ENCODE measurements at regions of chr6 and their contacts with region 1.

Region 1: GRCh38 chr6:33425668-33426577 is 6.1 kb downstream of the SYNGAP1 start:
- DNase-seq: peak; percentile 94 to 98 (median 96)
- ATAC-seq: peak; percentile 87
- H3K4me3 ChIP-seq: peak overlapping the region; percentile 57
- H3K27ac ChIP-seq: peak overlapping the region; percentile 95
- H3K4me1 ChIP-seq: peaks cover 43 to 53% of the 10 kb centered on the region in 2 experiments
- H3K27me3 ChIP-seq: no peaks in the 10 kb centered on the region
- CTCF ChIP-seq: peak; percentile 72 to 95 (median 90)
- EP300 ChIP-seq: no peak; the same call in 1 of the 2 replicates
- POLR2A ChIP-seq: peak; percentile 6; the same call in 1 of the 2 replicates
- RAD21 ChIP-seq: peak; percentile 74 to 79

Region 2: GRCh38 chr6:33271458-33272274 is 154.3 kb before region 1 on chr6 and contains the starts of genes RPS18 and VPS52:
- CTCF ChIA-PET with region 1: interaction called, 4 read pairs
- POLR2A ChIA-PET with region 1: interaction called, 14 read pairs
- in situ Hi-C with region 1: no loop called
- intact Hi-C with region 1: no loop called
- DNase-seq: peak; percentile 89 to 100 (median 92)
- ATAC-seq: peak; percentile 85
- H3K4me3 ChIP-seq: peak within 1 kb of the TSS; percentile 93
- H3K27ac ChIP-seq: peak within 1 kb of the TSS; percentile 98
- H3K4me1 ChIP-seq: peaks cover 11 to 38% of the 10 kb centered on the region in 2 experiments
- H3K27me3 ChIP-seq: no peaks in the 10 kb centered on the region; a peak in 1 of 5 replicates
- CTCF ChIP-seq: 0 out of 6 replicates have a peak, but pooled peaks of 1 of the 3 experiments have one; percentile 4
- EP300 ChIP-seq: peak; percentile 68; the same call in 1 of the 2 replicates
- POLR2A ChIP-seq: peak; percentile 100
- RAD21 ChIP-seq: peak in 1 of 2 experiments; percentile 16; a peak in 1 of 4 replicates
- polyA plus RNA-seq, gene RPS18: 14,899 to 17,516 TPM
- polyA plus RNA-seq, gene VPS52: 24.4 to 37.6 TPM

Region 3: GRCh38 chr6:33299237-33299944 is 126.5 kb before region 1 on chr6:
- CTCF ChIA-PET with region 1: interaction called, 4 read pairs
- POLR2A ChIA-PET with region 1: interaction called, 20 read pairs
- in situ Hi-C with region 1: no loop called
- intact Hi-C with region 1: loop called (anchors 5 kb)
- DNase-seq: peak; percentile 90 to 98 (median 92)
- ATAC-seq: peak; percentile 84
- H3K4me3 ChIP-seq: peak overlapping the region; percentile 64
- H3K27ac ChIP-seq: peak overlapping the region; percentile 94
- H3K4me1 ChIP-seq: peaks cover 11 to 44% of the 10 kb centered on the region in 2 experiments
- H3K27me3 ChIP-seq: no peaks in the 10 kb centered on the region
- CTCF ChIP-seq: peak; percentile 89 to 97 (median 97)
- EP300 ChIP-seq: peak; percentile 46
- POLR2A ChIP-seq: peak; percentile 99
- RAD21 ChIP-seq: peak; percentile 68 to 69

Region 4: GRCh38 chr6:33391278-33391921 is 34.5 kb before region 1 on chr6 and contains the start of gene KIFC1:
- CTCF ChIA-PET with region 1: interaction called, 12 read pairs
- POLR2A ChIA-PET with region 1: interaction called, 3 read pairs
- in situ Hi-C with region 1: no loop called
- intact Hi-C with region 1: loop called (anchors 1 kb)
- DNase-seq: peak; percentile 98 to 100 (median 98)
- ATAC-seq: peak; percentile 97
- H3K4me3 ChIP-seq: peak within 1 kb of the TSS; percentile 74
- H3K27ac ChIP-seq: peak within 1 kb of the TSS; percentile 89
- H3K4me1 ChIP-seq: peaks cover 19 to 22% of the 10 kb centered on the region in 2 experiments
- H3K27me3 ChIP-seq: no peaks in the 10 kb centered on the region
- CTCF ChIP-seq: peak; percentile 99 to 100 (median 99)
- EP300 ChIP-seq: peak; percentile 39; the same call in 1 of the 2 replicates
- POLR2A ChIP-seq: 0 out of 2 replicates have a peak, but pooled peaks have one; percentile 85
- RAD21 ChIP-seq: peak; percentile 86 to 89
- polyA plus RNA-seq, gene KIFC1: 1.3 to 2.2 TPM

Region 5: DNA sequence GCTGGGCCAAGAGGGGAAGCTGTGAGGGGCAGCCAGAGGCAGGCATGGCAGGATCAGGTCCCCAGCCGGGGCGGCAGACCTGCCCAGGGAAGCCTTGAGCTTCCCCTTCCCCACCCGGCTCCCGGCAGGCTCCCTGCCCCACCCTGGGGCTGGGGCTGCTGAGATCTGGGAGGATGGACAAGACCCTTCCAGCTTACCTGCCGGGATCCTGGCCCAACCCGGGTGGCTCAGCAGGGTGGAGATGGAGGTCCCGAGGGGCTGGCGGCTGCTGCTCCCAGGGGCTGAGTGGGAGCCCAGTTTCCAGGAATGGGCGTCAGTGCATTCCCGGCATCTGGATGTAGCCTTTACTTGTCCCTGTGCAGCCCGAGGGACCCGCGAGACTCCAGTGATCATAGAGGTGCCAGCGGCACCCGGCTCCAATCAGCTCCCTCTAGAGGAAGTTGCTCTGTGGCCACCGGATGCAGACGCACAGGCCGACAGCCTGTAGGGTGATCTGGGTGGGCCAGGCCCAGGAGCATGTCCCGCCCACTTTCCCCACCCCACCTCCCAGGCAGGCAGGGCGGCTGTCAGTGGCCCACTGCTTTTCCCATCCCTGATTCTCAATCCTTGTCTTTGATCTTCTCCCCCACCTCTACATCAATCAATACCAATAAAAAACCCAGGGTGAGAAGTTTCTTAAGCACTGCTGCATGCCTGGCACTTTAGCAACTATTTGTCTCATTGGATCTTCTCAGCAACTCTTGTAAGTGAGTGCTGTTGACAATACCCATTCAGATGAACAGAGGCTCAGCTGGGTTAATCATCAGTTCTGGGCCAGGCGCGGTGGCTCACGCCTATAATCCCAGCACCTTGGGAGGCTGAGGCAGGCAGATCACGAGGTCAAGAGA is 154.1 kb after region 1 on chr6 and contains the start of gene BAK1:
- CTCF ChIA-PET with region 1: no interaction called
- POLR2A ChIA-PET with region 1: interaction called, 4 read pairs
- in situ Hi-C with region 1: no loop called
- intact Hi-C with region 1: loop called (anchors 5 kb)
- DNase-seq: peak; percentile 96 to 98 (median 97)
- ATAC-seq: peak; percentile 98
- H3K4me3 ChIP-seq: peak within 1 kb of the TSS; percentile 97
- H3K27ac ChIP-seq: peak within 1 kb of the TSS; percentile 72
- H3K4me1 ChIP-seq: peaks cover 10 to 40% of the 10 kb centered on the region in 2 experiments; a peak in 4 of 5 replicates
- H3K27me3 ChIP-seq: no peaks in the 10 kb centered on the region
- CTCF ChIP-seq: peak; percentile 76 to 88 (median 81)
- EP300 ChIP-seq: no peak
- POLR2A ChIP-seq: peak; percentile 84
- RAD21 ChIP-seq: peak in 1 of 2 experiments; percentile 51; a peak in 2 of 4 replicates
- polyA plus RNA-seq, gene BAK1: 5.4 to 9.7 TPM